ENCODE measurements at regions of chr2 and their contacts with region 1.

Region 1: GRCh38 chr2:46735730-46736493 is 179.7 kb downstream of the MCFD2 start:
- DNase-seq: no peak
- ATAC-seq: no peak
- H3K4me3 ChIP-seq: no peak overlapping the region
- H3K27ac ChIP-seq: no peak overlapping the region
- H3K4me1 ChIP-seq: peaks cover 12% of the 10 kb centered on the region
- H3K27me3 ChIP-seq: no peaks in the 10 kb centered on the region
- CTCF ChIP-seq: no peak

Region 2: DNA sequence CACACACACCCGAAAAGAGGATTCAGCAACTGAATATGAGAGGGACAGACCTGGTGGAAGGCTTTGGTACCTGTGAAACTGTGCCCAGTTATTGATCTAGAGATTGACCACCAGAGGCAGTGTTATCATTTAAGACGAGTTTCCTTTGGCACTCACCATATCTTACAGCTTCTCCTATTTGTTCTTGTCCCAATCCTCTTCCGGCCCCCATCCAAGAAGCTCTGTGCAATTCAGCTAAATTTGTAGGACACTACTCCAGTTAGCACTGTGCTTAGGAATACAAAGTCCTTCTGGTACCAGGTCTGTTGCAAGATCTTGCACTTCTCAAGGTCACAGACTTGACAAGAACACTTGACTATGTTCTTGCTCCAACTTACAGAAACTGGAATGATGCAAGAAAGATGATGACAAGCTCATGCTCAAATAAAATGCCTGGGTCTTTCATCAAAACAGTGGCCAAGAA is 78.8 kb before region 1 on chr2:
- CTCF ChIA-PET with region 1: interaction called, 11 read pairs
- POLR2A ChIA-PET with region 1: no interaction called
- in situ Hi-C with region 1: no loop called
- intact Hi-C with region 1: no loop called
- DNase-seq: no peak
- ATAC-seq: peak; percentile 82
- H3K4me3 ChIP-seq: no peak overlapping the region
- H3K27ac ChIP-seq: no peak overlapping the region
- H3K4me1 ChIP-seq: no peaks in the 10 kb centered on the region; the same call in 1 of the 2 replicates
- H3K27me3 ChIP-seq: peaks cover 3% of the 10 kb centered on the region; the same call in 1 of the 2 replicates
- CTCF ChIP-seq: peak; percentile 69

Measured in Panc1 (cell line).